Activated naive CD4-positive, alpha-beta T cell treated with anti-CD3 and anti-CD28 coated beads for 36 hours (primary cell): ENCODE measurements at regions of chr3 and their contacts with region 1.

Region 1: DNA sequence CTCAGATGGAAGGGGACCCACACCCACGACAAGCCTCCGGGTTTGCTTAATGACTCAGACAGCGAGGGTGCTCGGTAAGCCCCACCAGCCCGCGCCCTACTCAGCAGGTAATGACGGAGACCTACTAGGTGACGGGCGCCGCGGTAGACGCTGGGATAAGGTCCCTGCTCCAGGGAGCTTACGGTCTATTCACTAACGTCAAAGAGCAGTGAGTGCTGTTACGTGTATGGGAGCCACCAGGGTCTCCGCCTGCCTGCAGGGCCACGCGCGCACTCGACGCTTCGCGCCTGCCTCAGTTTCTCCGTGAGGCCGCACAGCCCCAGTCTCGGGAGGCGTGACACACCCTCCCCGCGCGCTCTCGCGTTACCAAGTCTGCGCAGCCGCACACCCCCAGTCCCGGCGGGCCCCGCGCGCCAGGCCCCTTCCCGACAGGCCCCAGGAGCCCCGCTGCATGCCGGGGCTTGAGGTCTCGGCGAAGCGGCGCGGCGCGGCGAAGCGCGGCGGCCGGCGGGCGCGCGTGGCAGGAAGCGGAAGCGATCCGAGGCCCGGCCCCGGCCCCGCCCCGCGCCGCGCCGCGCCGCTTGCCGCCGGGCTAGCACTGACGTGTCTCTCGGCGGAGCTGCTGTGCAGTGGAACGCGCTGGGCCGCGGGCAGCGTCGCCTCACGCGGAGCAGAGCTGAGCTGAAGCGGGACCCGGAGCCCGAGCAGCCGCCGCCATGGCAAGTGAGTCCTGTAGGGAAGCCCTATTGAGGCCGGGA is at the start of gene SEC61A1:
- DNase-seq: peak; percentile 95
- H3K4me3 Mint-ChIP-seq: peak within 1 kb of the TSS; percentile 91
- H3K27ac Mint-ChIP-seq: peak within 1 kb of the TSS; percentile 95
- H3K4me1 Mint-ChIP-seq: peaks cover 40% of the 10 kb centered on the region
- H3K27me3 Mint-ChIP-seq: peaks cover under 1% of the 10 kb centered on the region
- total RNA-seq, gene SEC61A1: 115 to 119 TPM

Region 2: DNA sequence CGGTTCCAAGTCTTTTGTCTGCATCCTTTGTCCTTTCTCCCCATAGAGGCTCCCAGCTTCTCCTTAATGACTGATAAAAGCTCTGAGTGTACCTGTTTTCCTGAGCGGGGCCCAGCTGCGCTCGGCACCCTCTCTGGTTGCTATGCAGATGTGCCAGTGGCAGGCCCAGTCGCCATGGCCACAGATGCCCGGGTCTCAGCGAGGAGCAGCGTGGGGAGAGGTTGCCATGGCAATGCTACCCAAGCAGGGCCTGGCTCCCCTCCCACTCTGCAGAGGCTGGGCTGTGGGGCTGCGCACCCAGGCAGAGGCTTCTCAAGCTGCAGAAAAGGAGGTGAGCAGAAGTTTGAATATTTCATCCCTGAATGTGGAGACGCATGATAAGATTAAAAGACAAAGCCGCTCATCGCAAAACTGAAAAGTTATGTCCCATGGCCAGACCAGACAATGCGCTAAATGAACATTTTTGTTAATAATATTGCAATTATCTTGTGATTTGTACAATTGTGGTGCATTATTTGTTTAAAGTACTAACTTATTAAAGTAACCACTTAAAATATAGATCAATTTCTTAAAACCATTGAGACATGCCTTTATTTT is 527.6 kb before region 1 on chr3:
- CTCF ChIA-PET with region 1: no interaction called
- intact Hi-C with region 1: no loop called
- DNase-seq: no peak
- H3K4me3 Mint-ChIP-seq: no peak overlapping the region
- H3K27ac Mint-ChIP-seq: no peak overlapping the region
- H3K4me1 Mint-ChIP-seq: no peaks in the 10 kb centered on the region
- H3K27me3 Mint-ChIP-seq: peaks cover 8% of the 10 kb centered on the region

Region 3: DNA sequence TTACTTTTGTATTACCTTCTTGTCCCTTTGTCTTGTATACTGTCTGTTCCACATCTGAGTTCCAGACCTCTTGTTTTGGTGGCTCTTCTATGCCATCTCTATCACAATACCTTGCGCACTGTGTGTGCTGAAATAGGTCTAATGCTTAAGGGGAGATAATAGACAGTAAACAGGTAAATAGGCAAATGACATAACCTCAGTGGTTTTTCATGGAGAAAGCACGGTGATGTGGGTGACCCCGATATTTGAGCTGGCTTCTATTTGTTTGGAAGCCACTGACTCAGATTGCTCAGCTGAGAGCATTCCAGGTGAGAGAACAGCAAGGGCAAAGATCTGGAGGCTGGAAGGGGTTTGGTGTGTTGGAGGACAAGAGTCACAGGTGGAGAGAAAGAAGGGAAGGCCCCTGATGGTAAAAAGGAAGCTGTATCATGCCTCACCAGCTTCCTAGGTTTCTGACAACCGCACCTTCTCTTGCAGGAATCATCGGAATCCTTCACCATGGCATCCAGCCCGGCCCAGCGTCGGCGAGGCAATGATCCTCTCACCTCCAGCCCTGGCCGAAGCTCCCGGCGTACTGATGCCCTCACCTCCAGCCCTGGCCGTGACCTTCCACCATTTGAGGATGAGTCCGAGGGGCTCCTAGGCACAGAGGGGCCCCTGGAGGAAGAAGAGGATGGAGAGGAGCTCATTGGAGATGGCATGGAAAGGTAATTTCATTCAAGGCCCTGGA is 453.0 kb before region 1 on chr3:
- CTCF ChIA-PET with region 1: no interaction called
- intact Hi-C with region 1: loop called (anchors 1 kb)
- DNase-seq: no peak
- H3K4me3 Mint-ChIP-seq: peak overlapping the region; percentile 84
- H3K27ac Mint-ChIP-seq: peak overlapping the region; percentile 89
- H3K4me1 Mint-ChIP-seq: peaks cover 40% of the 10 kb centered on the region
- H3K27me3 Mint-ChIP-seq: no peaks in the 10 kb centered on the region

Region 4: DNA sequence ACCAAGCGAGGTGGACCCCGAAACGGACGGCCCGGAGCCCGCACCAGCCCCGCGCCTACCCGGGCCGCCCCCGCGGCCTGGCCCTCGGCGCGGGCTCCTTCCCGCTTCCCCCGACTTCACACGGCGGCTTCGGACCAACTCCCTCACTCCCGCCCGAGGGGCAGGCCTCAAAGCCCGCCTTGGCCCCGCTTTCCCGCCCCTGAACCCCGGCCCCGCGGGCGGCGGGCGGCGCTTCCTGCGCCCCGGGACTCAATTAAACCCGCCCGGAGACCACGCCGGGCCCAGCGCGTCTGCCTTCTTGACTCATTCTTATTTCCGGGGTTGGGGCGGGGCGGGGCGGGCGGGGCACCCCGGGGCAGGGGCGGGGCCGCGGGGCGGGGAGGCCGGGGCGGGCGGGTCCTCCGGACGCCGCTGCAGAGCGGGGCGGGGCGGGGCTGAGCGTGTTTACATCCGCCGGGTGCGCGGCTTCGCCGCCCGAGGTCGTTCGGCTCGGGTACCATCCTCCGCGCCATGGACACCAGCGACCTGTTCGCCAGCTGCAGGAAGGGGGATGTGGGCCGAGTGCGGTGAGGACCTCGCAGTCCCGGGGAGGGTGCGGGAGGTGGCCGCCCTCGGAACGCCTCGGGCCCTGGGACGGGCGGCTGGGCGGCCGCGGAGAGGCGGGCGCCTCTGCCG is 379.4 kb before region 1 on chr3 and contains the start of gene ABTB1:
- CTCF ChIA-PET with region 1: no interaction called
- intact Hi-C with region 1: loop called (anchors 2 kb)
- DNase-seq: peak; percentile 89
- H3K4me3 Mint-ChIP-seq: peak within 1 kb of the TSS; percentile 86
- H3K27ac Mint-ChIP-seq: peak within 1 kb of the TSS; percentile 87
- H3K4me1 Mint-ChIP-seq: peaks cover 21% of the 10 kb centered on the region
- H3K27me3 Mint-ChIP-seq: no peaks in the 10 kb centered on the region
- total RNA-seq, gene ABTB1: 10.6 to 13.5 TPM

Region 5: GRCh38 chr3:128068211-128068620 is 16.2 kb after region 1 on chr3:
- CTCF ChIA-PET with region 1: interaction called, 19 read pairs
- intact Hi-C with region 1: no loop called
- DNase-seq: peak; percentile 41
- H3K4me3 Mint-ChIP-seq: no peak overlapping the region
- H3K27ac Mint-ChIP-seq: peak overlapping the region; percentile 44
- H3K4me1 Mint-ChIP-seq: peaks cover 2% of the 10 kb centered on the region
- H3K27me3 Mint-ChIP-seq: no peaks in the 10 kb centered on the region

Region 6: GRCh38 chr3:128145337-128145736 is 93.3 kb after region 1 on chr3:
- CTCF ChIA-PET with region 1: no interaction called
- intact Hi-C with region 1: no loop called
- DNase-seq: no peak
- H3K4me3 Mint-ChIP-seq: no peak overlapping the region
- H3K27ac Mint-ChIP-seq: no peak overlapping the region
- H3K4me1 Mint-ChIP-seq: no peaks in the 10 kb centered on the region
- H3K27me3 Mint-ChIP-seq: no peaks in the 10 kb centered on the region

Region 7: DNA sequence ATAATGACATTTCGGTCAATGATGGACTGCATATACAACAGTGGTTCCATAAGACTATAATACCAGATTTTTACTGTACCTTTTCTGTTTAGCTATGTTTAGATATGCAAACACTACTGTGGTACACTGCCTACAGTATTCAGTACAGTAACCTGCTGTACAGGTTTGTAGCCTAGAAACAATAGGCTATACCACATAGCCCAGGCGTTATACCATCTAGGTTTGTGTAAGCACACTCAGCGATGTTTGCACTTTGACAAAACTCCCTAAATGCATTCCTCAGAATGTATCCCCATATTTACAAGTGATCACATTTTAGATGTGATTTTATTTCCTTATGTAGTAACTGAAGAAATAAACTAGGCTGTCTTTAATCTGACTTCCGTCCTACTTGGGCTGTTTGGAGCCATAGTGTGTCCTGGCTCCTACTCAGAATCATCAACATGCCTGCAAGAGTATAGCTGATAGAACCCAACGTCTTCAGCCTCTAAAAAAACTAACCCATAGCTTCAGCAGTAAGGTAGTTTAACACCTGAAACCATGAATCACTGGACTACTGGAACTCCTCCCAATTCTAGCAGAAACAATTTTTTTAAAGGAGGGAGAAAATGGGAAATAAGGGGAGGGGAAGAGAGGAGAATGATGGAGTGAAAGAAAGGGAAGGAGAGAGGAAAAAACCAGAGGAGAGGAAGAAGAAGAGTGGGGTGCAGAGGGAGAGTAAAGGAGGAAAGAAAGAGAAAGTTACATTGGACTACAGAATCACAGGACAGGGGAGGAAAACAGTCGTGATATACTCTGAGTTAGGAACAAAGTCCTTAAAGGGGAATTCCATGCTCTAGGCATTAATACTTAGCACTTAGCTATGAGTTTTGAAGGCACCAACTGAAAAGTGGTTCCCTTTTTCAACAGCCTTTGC is 1622.1 kb after region 1 on chr3:
- CTCF ChIA-PET with region 1: no interaction called
- intact Hi-C with region 1: no loop called
- DNase-seq: no peak
- H3K4me3 Mint-ChIP-seq: no peak overlapping the region
- H3K27ac Mint-ChIP-seq: no peak overlapping the region
- H3K4me1 Mint-ChIP-seq: peaks cover 2% of the 10 kb centered on the region
- H3K27me3 Mint-ChIP-seq: no peaks in the 10 kb centered on the region